ENCODE measurements at regions of chr7 and their contacts with region 1.

Region 1: DNA sequence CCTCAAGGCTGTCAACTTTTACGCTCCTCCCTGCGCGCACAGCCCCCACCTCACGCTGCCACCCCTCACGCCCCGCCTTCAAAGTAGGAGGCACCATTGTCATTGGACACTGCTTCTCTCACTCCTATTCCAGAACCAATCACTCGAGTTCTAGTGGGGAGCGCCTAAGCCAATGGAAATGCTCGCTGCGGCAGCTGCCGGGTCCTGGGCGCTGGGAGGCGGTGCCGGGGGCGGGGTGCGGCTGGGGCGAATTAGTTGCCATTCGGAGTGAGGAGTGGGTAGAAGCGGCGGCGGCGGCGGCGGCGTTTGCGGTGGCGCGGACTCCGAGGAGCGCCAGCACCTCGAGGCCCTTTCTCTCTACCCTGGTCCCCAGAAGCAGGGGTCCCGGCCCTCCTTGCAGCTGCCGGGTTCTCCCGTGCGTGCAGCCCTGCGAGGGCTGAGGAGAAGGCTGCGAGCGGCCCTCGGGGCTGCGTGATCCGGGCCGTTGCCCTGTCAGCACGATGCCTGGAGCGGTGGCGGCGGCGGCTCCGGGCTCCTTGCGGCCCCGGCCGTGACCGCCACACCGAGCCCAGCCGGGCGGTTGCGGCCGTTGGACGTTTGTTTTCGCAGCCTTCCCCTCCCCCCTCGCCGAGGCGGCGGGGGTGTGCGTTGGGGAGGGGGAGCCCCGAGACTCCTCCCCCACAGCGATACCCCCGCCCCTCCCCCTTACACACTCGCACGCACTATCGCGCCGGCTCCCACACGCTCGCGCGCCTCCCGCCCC is at the start of gene GLCCI1:
- DNase-seq: peak; percentile 96
- ATAC-seq: peak; percentile 87
- H3K4me3 ChIP-seq: peak within 1 kb of the TSS; percentile 88
- H3K27ac ChIP-seq: peak within 1 kb of the TSS; percentile 70
- H3K4me1 ChIP-seq: peaks cover 35% of the 10 kb centered on the region
- H3K27me3 ChIP-seq: no peaks in the 10 kb centered on the region
- CTCF ChIP-seq: no peak
- total RNA-seq, gene GLCCI1: 7.8 and 8.5 TPM in 2 replicates

Region 2: GRCh38 chr7:7640221-7641128 is 328.2 kb before region 1 on chr7 and contains the start of gene UMAD1:
- CTCF ChIA-PET with region 1: no interaction called
- POLR2A ChIA-PET with region 1: no interaction called
- intact Hi-C with region 1: loop called (anchors 2 kb)
- DNase-seq: peak; percentile 99
- ATAC-seq: peak; percentile 96
- H3K4me3 ChIP-seq: peak within 1 kb of the TSS; percentile 83
- H3K27ac ChIP-seq: peak within 1 kb of the TSS; percentile 50
- H3K4me1 ChIP-seq: peaks cover 20% of the 10 kb centered on the region; the same call in 1 of the 2 replicates
- H3K27me3 ChIP-seq: no peaks in the 10 kb centered on the region
- CTCF ChIP-seq: no peak
- total RNA-seq, gene UMAD1: 6.0 and 8.9 TPM in 2 replicates

Region 3: GRCh38 chr7:7696458-7697119 is 272.1 kb before region 1 on chr7:
- CTCF ChIA-PET with region 1: no interaction called
- POLR2A ChIA-PET with region 1: interaction called, 10 read pairs
- intact Hi-C with region 1: no loop called
- DNase-seq: peak; percentile 58
- ATAC-seq: peak; percentile 80
- H3K4me3 ChIP-seq: peak overlapping the region; percentile 30; the same call in 1 of the 2 replicates
- H3K27ac ChIP-seq: peak overlapping the region; percentile 38; the same call in 1 of the 2 replicates
- H3K4me1 ChIP-seq: peaks cover 36% of the 10 kb centered on the region
- H3K27me3 ChIP-seq: no peaks in the 10 kb centered on the region
- CTCF ChIP-seq: no peak

Region 4: GRCh38 chr7:7861211-7861633 is 107.5 kb before region 1 on chr7:
- CTCF ChIA-PET with region 1: no interaction called
- POLR2A ChIA-PET with region 1: no interaction called
- intact Hi-C with region 1: loop called (anchors 1 kb)
- DNase-seq: peak; percentile 86
- ATAC-seq: peak; percentile 97
- H3K4me3 ChIP-seq: no peak overlapping the region
- H3K27ac ChIP-seq: peak overlapping the region; percentile 42
- H3K4me1 ChIP-seq: peaks cover 27% of the 10 kb centered on the region
- H3K27me3 ChIP-seq: no peaks in the 10 kb centered on the region
- CTCF ChIP-seq: no peak

Region 5: GRCh38 chr7:7996576-7996975 is 27.9 kb after region 1 on chr7:
- CTCF ChIA-PET with region 1: interaction called, 3 read pairs
- POLR2A ChIA-PET with region 1: no interaction called
- intact Hi-C with region 1: loop called (anchors 1 kb)
- DNase-seq: peak; percentile 95
- ATAC-seq: peak; percentile 99
- H3K4me3 ChIP-seq: peak overlapping the region; percentile 44; the same call in 1 of the 2 replicates
- H3K27ac ChIP-seq: peak overlapping the region; percentile 67
- H3K4me1 ChIP-seq: peaks cover 15% of the 10 kb centered on the region
- H3K27me3 ChIP-seq: no peaks in the 10 kb centered on the region
- CTCF ChIP-seq: no peak

Region 6: GRCh38 chr7:8092140-8092539 is 123.4 kb after region 1 on chr7:
- CTCF ChIA-PET with region 1: no interaction called
- POLR2A ChIA-PET with region 1: interaction called, 4 read pairs
- intact Hi-C with region 1: loop called (anchors 1 kb)
- DNase-seq: no peak
- ATAC-seq: no peak
- H3K4me3 ChIP-seq: no peak overlapping the region
- H3K27ac ChIP-seq: no peak overlapping the region
- H3K4me1 ChIP-seq: no peaks in the 10 kb centered on the region
- H3K27me3 ChIP-seq: no peaks in the 10 kb centered on the region
- CTCF ChIP-seq: no peak

Measured in PC-3 (cell line).